AG04449 (cell line): ENCODE measurements at regions of chr9 and their contacts with region 1.

Region 1: DNA sequence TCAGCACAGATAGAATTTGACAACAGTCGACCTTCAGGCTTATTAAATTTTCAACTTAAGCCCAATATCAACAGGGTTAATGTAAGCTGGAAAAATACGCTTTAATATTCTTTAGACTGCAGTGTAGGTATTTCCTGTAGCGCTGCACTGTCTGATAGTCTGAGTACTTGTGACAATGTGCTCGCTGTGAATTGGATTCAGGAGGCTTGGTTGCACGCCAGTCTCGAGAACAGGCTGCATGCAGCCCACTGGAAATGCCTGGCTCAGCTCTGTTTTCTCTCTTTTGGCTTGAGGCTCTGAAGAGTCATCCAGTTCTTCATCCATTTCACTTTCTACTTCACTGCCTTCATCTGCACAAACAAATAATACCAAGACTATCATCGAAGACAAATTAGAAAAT is 300.9 kb downstream of the RFX3 start:
- DNase-seq: no peak
- H3K4me3 ChIP-seq: no peak overlapping the region
- CTCF ChIP-seq: no peak

Region 2: GRCh38 chr9:3240656-3241268 is 15.8 kb after region 1 on chr9:
- CTCF ChIA-PET with region 1: interaction called, 10 read pairs
- POLR2A ChIA-PET with region 1: no interaction called
- DNase-seq: no peak
- H3K4me3 ChIP-seq: no peak overlapping the region
- CTCF ChIP-seq: peak; percentile 88